ENCODE measurements at regions of chr19 and their contacts with region 1.

Region 1: GRCh38 chr19:57362997-57363705 is at the starts of genes TRAPPC2B and ZNF547:
- DNase-seq: peak; percentile 98
- H3K4me3 Mint-ChIP-seq: peak within 1 kb of the TSS; percentile 89
- H3K27ac Mint-ChIP-seq: peak within 1 kb of the TSS; percentile 97
- H3K4me1 Mint-ChIP-seq: peaks cover 17% of the 10 kb centered on the region
- H3K27me3 Mint-ChIP-seq: no peaks in the 10 kb centered on the region
- total RNA-seq, gene TRAPPC2B: 3.8 and 4.7 TPM in 2 replicates
- total RNA-seq, gene ZNF547: 0.69 and 0.93 TPM in 2 replicates

Region 2: GRCh38 chr19:57191141-57192076 is 171.7 kb before region 1 on chr19 and contains the start of gene ZNF264:
- intact Hi-C with region 1: loop called (anchors 1 kb)
- DNase-seq: peak; percentile 86
- H3K4me3 Mint-ChIP-seq: peak within 1 kb of the TSS; percentile 94
- H3K27ac Mint-ChIP-seq: peak within 1 kb of the TSS; percentile 85
- H3K4me1 Mint-ChIP-seq: peaks cover 24% of the 10 kb centered on the region
- H3K27me3 Mint-ChIP-seq: no peaks in the 10 kb centered on the region
- total RNA-seq, gene ZNF264: 16.1 and 18.3 TPM in 2 replicates

Region 3: DNA sequence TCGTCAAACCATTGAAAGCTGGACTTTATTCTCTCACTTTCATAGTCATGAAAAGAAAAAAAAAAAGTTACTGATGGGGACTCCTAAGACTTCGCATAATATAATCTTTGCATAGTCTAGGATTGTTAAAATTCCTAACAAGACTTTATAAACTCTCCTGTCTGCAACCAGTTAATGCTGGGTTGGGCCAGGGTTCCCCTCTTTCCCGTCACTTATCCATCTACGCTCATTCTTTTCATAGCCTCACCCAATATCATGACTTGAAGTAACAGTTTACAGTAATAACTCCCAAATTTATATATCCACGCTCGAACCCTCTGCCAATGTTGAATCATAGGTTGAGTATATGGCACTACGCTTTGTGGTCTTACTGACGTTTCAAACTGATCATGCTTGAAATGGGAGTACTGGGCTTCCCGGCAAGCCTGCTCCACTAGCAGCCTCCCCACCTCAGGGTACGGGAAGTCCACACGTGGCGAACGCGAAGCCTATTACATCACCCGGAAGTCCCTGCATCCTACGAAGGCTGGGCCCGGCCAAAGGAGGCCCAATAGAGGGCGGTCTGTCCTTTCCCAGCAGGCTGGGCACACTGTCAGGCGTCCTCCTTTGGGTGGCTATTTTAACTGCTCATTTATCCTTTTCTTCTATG is 83.6 kb before region 1 on chr19:
- intact Hi-C with region 1: loop called (anchors 1 kb)
- DNase-seq: peak; percentile 75
- H3K4me3 Mint-ChIP-seq: no peak overlapping the region
- H3K27ac Mint-ChIP-seq: no peak overlapping the region
- H3K4me1 Mint-ChIP-seq: peaks cover 23% of the 10 kb centered on the region
- H3K27me3 Mint-ChIP-seq: peaks cover 2% of the 10 kb centered on the region

Region 4: GRCh38 chr19:57350877-57351805 is 12.0 kb before region 1 on chr19 and contains the start of gene ZNF304:
- intact Hi-C with region 1: loop called (anchors 1 kb)
- DNase-seq: peak; percentile 84
- H3K4me3 Mint-ChIP-seq: peak within 1 kb of the TSS; percentile 92
- H3K27ac Mint-ChIP-seq: peak within 1 kb of the TSS; percentile 90
- H3K4me1 Mint-ChIP-seq: peaks cover 29% of the 10 kb centered on the region
- H3K27me3 Mint-ChIP-seq: no peaks in the 10 kb centered on the region
- total RNA-seq, gene ZNF304: 6.1 and 6.6 TPM in 2 replicates

Region 5: GRCh38 chr19:57477191-57478008 is 114.2 kb after region 1 on chr19 and contains the start of gene ZNF772:
- intact Hi-C with region 1: loop called (anchors 2 kb)
- DNase-seq: peak; percentile 80
- H3K4me3 Mint-ChIP-seq: peak within 1 kb of the TSS; percentile 90
- H3K27ac Mint-ChIP-seq: peak within 1 kb of the TSS; percentile 89
- H3K4me1 Mint-ChIP-seq: peaks cover 11% of the 10 kb centered on the region
- H3K27me3 Mint-ChIP-seq: no peaks in the 10 kb centered on the region
- total RNA-seq, gene ZNF772: 1.5 and 2.4 TPM in 2 replicates

Region 6: GRCh38 chr19:57632987-57633831 is 270.1 kb after region 1 on chr19 and contains the start of gene ZNF211:
- intact Hi-C with region 1: loop called (anchors 1 kb)
- DNase-seq: peak; percentile 80
- H3K4me3 Mint-ChIP-seq: peak within 1 kb of the TSS; percentile 89
- H3K27ac Mint-ChIP-seq: peak within 1 kb of the TSS; percentile 78
- H3K4me1 Mint-ChIP-seq: peaks cover 19% of the 10 kb centered on the region
- H3K27me3 Mint-ChIP-seq: no peaks in the 10 kb centered on the region
- total RNA-seq, gene ZNF211: 8.3 and 8.4 TPM in 2 replicates

Measured in activated T-helper 1 cell treated with anti-CD3 and anti-CD28 coated beads, Interleukin-12 subunit alpha, Interleukin-12 subunit beta, Interleukin-2, Interleukin-4 antibody, amounts not matched to agents 30 ng/mL and 10 ng/mL and 1 ng/mL, durations not matched to agents 14 hours and 24 hours and 36 hours (primary cell).